Ovary (tissue), 10 donors: ENCODE measurements at regions of chr22 and their contacts with region 1.

Region 1: DNA sequence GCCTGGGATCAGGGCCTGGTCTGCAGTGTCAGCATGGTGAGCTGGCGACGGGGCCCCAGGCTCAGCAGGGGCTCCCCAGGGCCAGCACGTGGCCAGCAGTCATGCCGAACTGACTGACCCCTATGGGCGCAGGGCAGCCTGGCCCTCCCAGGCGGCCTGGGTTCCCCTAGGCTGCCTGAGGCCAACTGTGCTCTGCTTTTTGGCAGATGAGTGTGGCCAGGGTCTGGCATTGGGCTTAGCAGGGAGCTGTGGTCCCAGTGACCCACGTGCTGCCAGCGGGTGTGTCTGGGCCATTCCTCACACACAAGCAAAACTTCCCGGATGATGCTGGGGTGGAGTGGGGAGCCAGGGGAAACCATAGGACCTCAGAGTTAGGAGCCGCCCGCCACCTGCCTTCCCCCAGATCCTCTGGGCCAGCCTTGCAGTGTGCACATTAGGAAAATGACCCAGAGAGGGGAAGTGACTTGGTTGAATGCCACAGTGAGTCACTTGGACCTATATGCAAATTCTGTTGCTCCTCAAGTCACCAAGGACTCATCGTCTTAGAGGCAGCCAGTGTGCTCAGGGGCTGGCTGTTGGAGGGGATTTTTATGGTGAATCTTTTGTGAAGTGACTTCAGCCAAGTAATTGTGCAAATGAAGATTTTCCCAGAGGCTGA is 6.5 kb downstream of the ADORA2A start:
- DNase-seq: no peak
- H3K4me3 ChIP-seq: no peak overlapping the region
- H3K27ac ChIP-seq: no peak overlapping the region
- H3K4me1 ChIP-seq: peaks cover 10% of the 10 kb centered on the region
- H3K27me3 ChIP-seq: no peaks in the 10 kb centered on the region
- CTCF ChIP-seq: no peak
- EP300 ChIP-seq: no peak
- POLR2A ChIP-seq: no peak

Region 2: DNA sequence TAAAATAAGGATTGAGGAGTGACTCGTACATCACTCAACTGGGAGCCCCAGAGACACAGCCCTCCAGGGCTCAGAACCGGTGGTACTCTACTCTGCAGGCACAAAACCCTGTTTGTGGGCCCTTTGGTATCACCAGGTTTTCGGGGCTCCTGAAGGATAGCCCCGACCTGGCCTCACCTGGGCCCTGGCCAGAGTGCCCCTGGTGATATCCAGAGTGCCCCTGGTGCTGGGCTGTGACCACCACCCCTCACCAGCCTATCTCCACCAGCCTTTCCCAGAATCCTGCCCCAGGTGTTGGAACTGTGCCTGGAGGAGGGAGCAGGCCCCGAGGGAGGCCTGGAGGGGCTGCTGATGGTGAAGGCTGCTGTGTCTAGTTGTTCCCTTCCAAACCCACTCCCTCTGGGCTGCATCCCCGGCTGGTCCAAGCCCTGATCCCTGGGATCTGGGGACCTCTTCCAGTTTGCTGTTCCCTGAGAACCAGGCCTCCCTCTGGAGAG is 186.9 kb before region 1 on chr22:
- intact Hi-C with region 1: no loop called
- DNase-seq: no peak
- H3K4me3 ChIP-seq: no peak overlapping the region
- H3K27ac ChIP-seq: peak overlapping the region; percentile 84 to 93
- H3K4me1 ChIP-seq: peaks cover 21% of the 10 kb centered on the region
- H3K27me3 ChIP-seq: no peaks in the 10 kb centered on the region
- CTCF ChIP-seq: no peak
- EP300 ChIP-seq: no peak
- POLR2A ChIP-seq: no peak

Region 3: GRCh38 chr22:24379536-24379935 is 54.4 kb before region 1 on chr22:
- intact Hi-C with region 1: no loop called
- DNase-seq: no peak
- H3K4me3 ChIP-seq: no peak overlapping the region
- H3K27ac ChIP-seq: no peak overlapping the region
- H3K4me1 ChIP-seq: no peaks in the 10 kb centered on the region
- H3K27me3 ChIP-seq: no peaks in the 10 kb centered on the region
- CTCF ChIP-seq: no peak
- EP300 ChIP-seq: no peak
- POLR2A ChIP-seq: no peak

Region 4: GRCh38 chr22:24402460-24403192 is 31.3 kb before region 1 on chr22:
- intact Hi-C with region 1: no loop called
- DNase-seq: peak in 4 of 5 donors; percentile 43 to 73 (median 60)
- H3K4me3 ChIP-seq: no peak overlapping the region
- H3K27ac ChIP-seq: no peak overlapping the region
- H3K4me1 ChIP-seq: peaks cover 9% of the 10 kb centered on the region
- H3K27me3 ChIP-seq: no peaks in the 10 kb centered on the region
- CTCF ChIP-seq: no peak
- EP300 ChIP-seq: no peak
- POLR2A ChIP-seq: no peak

Region 5: DNA sequence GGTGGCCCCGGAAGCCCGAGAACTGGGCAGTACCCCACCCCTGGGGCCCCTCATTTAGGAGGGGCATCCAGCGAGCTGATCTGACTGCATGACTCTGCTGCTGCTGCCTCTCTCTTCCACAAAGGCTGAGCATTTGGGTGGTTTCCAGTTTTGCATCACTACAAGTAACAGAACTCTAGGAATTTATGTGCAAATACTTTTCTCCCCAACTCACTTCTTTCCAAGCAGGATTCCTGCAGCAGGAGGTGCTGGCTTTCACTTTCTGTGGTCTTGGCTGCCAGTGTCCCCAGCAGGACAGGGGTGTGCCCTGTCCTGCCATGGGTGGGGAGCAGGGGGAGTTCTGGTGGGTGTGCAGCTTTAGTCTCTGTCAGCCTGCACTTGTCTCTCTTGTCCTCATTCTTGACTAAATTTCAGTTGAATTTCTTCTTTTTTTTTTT is 82.4 kb after region 1 on chr22:
- intact Hi-C with region 1: loop called in 1 of 4 experiments (anchors 10 kb)
- DNase-seq: no peak
- H3K4me3 ChIP-seq: no peak overlapping the region
- H3K27ac ChIP-seq: no peak overlapping the region
- H3K4me1 ChIP-seq: no peaks in the 10 kb centered on the region
- H3K27me3 ChIP-seq: no peaks in the 10 kb centered on the region
- CTCF ChIP-seq: no peak
- EP300 ChIP-seq: no peak
- POLR2A ChIP-seq: no peak

Region 6: GRCh38 chr22:24564376-24565058 is 130.6 kb after region 1 on chr22:
- intact Hi-C with region 1: no loop called
- DNase-seq: no peak
- H3K4me3 ChIP-seq: no peak overlapping the region
- H3K27ac ChIP-seq: no peak overlapping the region
- H3K4me1 ChIP-seq: no peaks in the 10 kb centered on the region
- H3K27me3 ChIP-seq: no peaks in the 10 kb centered on the region
- CTCF ChIP-seq: no peak
- EP300 ChIP-seq: no peak
- POLR2A ChIP-seq: no peak